ENCODE measurements at regions of chr5 and their contacts with region 1.

Region 1: DNA sequence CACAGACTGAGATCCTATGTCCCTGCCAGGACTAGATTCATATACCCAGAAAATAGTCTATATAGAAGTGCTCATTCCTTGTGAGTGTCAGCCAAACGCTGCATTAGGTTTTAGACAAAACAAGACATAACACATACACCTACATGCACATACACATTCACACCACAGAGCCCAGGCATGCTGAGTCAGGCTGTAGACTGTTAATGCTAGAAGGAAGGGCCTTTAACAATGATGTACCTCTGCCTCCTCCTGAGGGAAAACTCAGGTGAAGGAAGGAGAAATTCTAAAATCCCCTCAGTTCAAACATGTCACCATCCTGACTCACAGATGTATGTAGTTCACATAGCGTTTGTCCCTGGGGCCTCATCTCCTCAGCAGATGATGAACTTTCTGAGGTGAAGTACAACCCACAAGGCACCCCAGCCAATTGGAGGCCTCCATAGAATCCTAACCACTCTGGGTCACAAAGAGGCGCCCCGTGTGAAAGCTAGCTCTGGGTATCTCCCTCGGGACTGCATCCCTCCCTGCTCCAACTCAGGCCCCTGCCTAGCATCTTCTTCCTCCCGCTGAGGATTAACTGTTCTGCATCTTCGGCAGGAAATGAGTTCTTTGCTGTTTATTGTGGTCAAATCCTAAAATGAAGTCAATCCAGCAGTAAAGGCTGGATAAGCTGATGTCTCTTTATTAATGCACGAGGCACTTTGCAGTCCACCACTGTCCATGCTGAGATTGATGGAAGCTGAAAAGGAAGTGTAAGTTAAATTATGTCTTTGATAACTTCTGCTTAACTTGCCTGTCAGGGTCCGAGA is 40.8 kb upstream of the FSTL4 start:
- DNase-seq: peak; percentile 35
- H3K4me3 ChIP-seq: no peak overlapping the region
- H3K27ac ChIP-seq: no peak overlapping the region
- H3K4me1 ChIP-seq: no peaks in the 10 kb centered on the region
- H3K27me3 ChIP-seq: peaks cover 2% of the 10 kb centered on the region
- CTCF ChIP-seq: no peak

Region 2: DNA sequence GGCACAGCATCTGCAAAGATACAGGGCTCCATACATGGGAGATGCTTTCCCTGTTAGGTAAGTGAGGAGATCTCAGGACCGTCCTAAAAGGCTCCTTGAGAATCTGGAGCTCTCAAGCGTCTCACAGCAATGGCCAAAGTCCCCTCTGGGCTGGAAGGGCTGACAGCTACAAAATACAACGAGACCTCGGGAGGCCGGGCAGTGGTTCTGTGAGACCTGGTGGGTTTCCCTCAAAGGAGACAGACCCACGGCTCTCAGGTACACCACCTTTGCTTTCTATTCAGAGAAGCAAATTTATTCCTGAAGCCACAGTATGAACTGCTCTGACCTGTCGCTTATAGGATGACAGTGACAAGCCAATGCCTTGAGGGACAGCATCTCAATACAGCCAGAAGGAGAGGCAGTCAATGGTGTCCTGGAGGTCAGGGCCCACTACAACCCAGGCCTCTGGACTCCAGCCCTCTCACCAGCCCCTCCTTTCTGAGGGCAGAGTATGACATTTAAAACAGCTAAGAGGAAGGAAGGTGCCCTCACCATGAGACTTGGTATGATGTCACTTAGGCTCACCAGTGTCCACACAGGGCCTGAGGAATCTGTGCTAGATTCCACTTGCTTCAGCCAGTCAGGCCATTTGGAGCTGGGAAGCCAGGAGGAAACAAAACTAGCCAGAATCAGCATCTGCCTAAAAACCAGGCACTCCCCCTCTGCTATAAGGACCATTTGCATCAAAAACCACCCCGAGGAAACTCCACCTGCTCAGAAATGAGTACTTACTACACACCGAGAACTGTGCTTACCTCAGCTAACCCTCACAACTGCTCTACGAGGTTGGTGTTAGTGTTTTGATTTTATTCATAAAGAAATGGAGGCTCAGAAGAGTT is 45.7 kb after region 1 on chr5:
- CTCF ChIA-PET with region 1: no interaction called
- dilution Hi-C with region 1: loop called (anchors 5 kb)
- in situ Hi-C with region 1: no loop called
- intact Hi-C with region 1: no loop called
- DNase-seq: no peak
- H3K4me3 ChIP-seq: no peak overlapping the region
- H3K27ac ChIP-seq: no peak overlapping the region
- H3K4me1 ChIP-seq: no peaks in the 10 kb centered on the region
- H3K27me3 ChIP-seq: no peaks in the 10 kb centered on the region
- CTCF ChIP-seq: no peak

Region 3: GRCh38 chr5:134026521-134027268 is 373.5 kb after region 1 on chr5:
- CTCF ChIA-PET with region 1: no interaction called
- dilution Hi-C with region 1: no loop called
- in situ Hi-C with region 1: no loop called
- intact Hi-C with region 1: no loop called
- DNase-seq: peak; percentile 72
- H3K4me3 ChIP-seq: no peak overlapping the region
- H3K27ac ChIP-seq: no peak overlapping the region
- H3K4me1 ChIP-seq: peaks cover 18% of the 10 kb centered on the region
- H3K27me3 ChIP-seq: no peaks in the 10 kb centered on the region
- CTCF ChIP-seq: peak; percentile 79 to 80

Measured in mammary epithelial cell (primary cell).